ENCODE measurements at regions of chr15 and their contacts with region 1.

Region 1: DNA sequence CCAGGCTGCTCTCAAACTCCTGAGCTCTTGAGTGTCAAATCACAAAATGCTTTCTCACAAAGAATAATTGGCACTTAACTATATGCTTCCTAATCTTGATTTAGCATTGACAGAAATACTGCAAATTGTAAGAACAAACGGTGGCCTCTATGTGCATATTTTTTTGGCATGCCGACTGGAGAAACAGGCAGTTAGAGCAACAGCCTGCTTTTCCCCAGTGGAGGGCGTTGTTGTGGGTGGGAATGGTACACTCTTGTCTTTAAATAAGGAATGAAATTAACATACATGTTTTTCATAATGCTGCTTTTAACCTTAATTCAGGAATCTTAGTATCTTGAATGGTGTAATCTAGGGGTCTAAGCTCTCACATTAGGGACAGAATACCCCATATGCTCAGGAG is 31.1 kb upstream of the SV2B start:
- DNase-seq: no peak
- H3K4me3 Mint-ChIP-seq: no peak overlapping the region
- H3K27ac Mint-ChIP-seq: no peak overlapping the region
- H3K4me1 Mint-ChIP-seq: peaks cover 23% of the 10 kb centered on the region
- H3K27me3 Mint-ChIP-seq: no peaks in the 10 kb centered on the region
- CTCF ChIP-seq: no peak

Region 2: DNA sequence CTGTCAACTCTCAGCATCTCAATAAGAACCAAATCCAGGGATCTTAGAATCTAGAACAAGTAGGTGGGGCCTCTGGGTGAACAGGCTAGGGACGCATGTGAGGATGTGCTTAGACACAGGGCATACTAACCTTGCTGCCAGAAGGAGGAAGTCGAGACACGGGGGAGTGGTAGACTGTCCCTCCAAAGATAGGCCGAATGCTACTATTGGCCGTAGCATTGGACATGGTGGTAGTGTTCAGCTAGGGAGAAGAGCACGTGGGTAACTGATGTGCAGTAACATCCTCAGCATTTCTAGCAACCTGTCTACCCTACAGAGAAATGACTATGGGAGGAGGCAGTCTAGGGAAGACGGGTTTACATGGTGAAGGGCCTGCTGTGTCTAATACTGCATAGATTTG is 98.7 kb before region 1 on chr15:
- CTCF ChIA-PET with region 1: no interaction called
- POLR2A ChIA-PET with region 1: no interaction called
- intact Hi-C with region 1: no loop called
- DNase-seq: no peak
- H3K4me3 Mint-ChIP-seq: no peak overlapping the region
- H3K27ac Mint-ChIP-seq: no peak overlapping the region
- H3K4me1 Mint-ChIP-seq: no peaks in the 10 kb centered on the region
- H3K27me3 Mint-ChIP-seq: no peaks in the 10 kb centered on the region
- CTCF ChIP-seq: no peak

Region 3: GRCh38 chr15:91099995-91100813 is 31.2 kb after region 1 on chr15 and contains the start of gene SV2B:
- CTCF ChIA-PET with region 1: interaction called, 3 read pairs
- POLR2A ChIA-PET with region 1: no interaction called
- intact Hi-C with region 1: loop called (anchors 5 kb)
- DNase-seq: peak; percentile 9
- H3K4me3 Mint-ChIP-seq: peak within 1 kb of the TSS; percentile 72
- H3K27ac Mint-ChIP-seq: no peak within 1 kb of the TSS
- H3K4me1 Mint-ChIP-seq: peaks cover 10% of the 10 kb centered on the region
- H3K27me3 Mint-ChIP-seq: peaks cover 95% of the 10 kb centered on the region
- CTCF ChIP-seq: no peak
- total RNA-seq, gene SV2B: 0.44 and 0.96 TPM in 2 replicates